AG04450 (cell line): ENCODE measurements at regions of chr5 and their contacts with region 1.

Region 1: GRCh38 chr5:39578887-39579497 is 154.2 kb upstream of the DAB2 start:
- DNase-seq: no peak
- H3K4me3 ChIP-seq: no peak overlapping the region
- H3K27ac ChIP-seq: no peak overlapping the region
- H3K27me3 ChIP-seq: no peaks in the 10 kb centered on the region
- CTCF ChIP-seq: peak; percentile 50

Region 2: DNA sequence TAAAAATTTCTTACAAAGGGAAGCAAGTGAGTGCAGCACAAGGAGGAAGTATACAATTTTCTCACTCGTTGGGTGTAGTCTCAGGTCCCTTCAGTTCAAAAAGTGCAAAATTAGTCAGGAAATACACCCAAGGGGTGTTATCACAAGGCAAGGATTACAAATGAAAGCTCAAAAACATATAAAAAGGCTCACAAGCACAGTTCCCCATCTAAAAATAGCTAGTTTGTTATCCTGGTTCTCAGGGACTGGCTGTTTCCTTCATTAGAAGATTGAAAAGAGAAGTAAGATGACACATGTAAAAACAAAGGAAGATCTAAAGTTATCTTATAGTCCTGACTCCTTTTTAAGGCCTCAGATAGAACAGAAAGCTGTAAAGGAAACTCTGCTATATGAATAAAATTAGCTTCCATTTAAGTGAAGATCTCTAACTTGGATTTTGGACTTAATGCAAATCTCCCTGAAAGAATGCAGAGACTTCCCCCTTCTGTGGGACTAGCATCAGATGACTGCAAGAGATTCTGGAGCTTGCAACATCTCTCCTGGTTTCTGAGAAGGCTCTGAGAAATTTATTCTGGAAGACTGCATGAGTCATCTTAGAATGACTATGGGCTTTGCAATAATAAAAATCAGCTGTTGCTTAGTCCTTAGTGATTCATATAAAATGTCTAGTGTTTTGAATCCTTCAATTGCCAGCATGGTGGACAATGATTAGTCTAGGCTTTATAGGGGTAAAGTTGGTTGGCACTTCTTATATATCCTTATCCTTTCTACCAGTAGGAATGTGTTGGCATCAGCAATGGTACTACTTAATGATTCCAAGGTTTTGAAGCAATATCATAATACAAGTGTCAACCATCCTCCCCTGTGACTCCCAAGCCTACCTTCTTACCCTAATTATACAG is 179.6 kb before region 1 on chr5:
- CTCF ChIA-PET with region 1: no interaction called
- POLR2A ChIA-PET with region 1: no interaction called
- DNase-seq: peak; percentile 93
- H3K4me3 ChIP-seq: no peak overlapping the region
- H3K27ac ChIP-seq: peak overlapping the region; percentile 92
- H3K27me3 ChIP-seq: no peaks in the 10 kb centered on the region
- CTCF ChIP-seq: no peak

Region 3: GRCh38 chr5:39658866-39659265 is 79.9 kb after region 1 on chr5:
- CTCF ChIA-PET with region 1: no interaction called
- POLR2A ChIA-PET with region 1: no interaction called
- DNase-seq: no peak
- H3K4me3 ChIP-seq: no peak overlapping the region
- H3K27ac ChIP-seq: no peak overlapping the region
- H3K27me3 ChIP-seq: no peaks in the 10 kb centered on the region
- CTCF ChIP-seq: no peak

Region 4: GRCh38 chr5:40277161-40277906 is 698.3 kb after region 1 on chr5:
- CTCF ChIA-PET with region 1: no interaction called
- POLR2A ChIA-PET with region 1: no interaction called
- DNase-seq: no peak
- H3K4me3 ChIP-seq: no peak overlapping the region
- H3K27ac ChIP-seq: no peak overlapping the region
- H3K27me3 ChIP-seq: no peaks in the 10 kb centered on the region
- CTCF ChIP-seq: no peak

Region 5: GRCh38 chr5:40688127-40688761 is 1109.3 kb after region 1 on chr5:
- CTCF ChIA-PET with region 1: interaction called, 13 read pairs
- POLR2A ChIA-PET with region 1: no interaction called
- DNase-seq: peak; percentile 72
- H3K4me3 ChIP-seq: no peak overlapping the region
- H3K27ac ChIP-seq: no peak overlapping the region
- H3K27me3 ChIP-seq: no peaks in the 10 kb centered on the region
- CTCF ChIP-seq: peak; percentile 87